ENCODE measurements at regions of chr7 and their contacts with region 1.

Region 1: DNA sequence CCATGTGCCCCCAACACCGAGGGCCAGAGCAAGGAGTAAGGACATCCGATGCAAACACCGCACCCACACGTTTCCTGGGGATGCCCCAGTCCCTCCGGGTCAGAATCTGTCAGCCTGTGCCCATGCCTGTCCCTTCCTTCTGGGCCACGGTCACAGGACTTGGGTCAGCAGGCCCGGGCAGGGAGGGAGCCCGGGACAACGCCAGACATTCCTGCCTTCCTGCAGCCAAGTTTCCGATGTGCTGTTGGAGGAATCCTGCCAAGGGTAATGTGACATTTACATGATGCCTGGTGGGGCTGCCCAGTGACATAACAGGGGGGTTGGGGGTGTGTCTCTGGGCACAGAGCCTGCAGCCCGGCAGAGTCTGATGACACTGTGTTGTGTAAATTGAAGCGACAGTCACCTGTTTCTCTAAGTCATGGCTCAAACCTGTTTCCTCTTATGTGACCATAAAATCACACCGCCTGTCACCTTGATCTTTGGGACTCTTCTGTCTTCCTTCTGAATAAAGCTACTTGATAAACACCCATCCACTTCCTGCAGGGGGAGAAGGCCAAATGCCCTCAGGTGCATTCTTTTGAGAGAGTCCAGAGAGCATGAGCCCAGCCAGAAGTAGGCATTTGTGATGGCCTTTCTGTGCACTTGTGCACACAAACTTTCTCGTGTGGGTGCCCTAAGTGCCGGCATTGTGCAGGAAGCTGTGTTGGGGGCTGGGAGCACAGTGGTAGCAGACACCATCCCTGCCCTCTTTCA is 175.3 kb upstream of the RHEB start:
- DNase-seq: peak; percentile 25
- H3K4me3 Mint-ChIP-seq: no peak overlapping the region
- H3K27ac Mint-ChIP-seq: peak overlapping the region; percentile 54
- H3K4me1 Mint-ChIP-seq: peaks cover 35% of the 10 kb centered on the region
- H3K27me3 Mint-ChIP-seq: no peaks in the 10 kb centered on the region
- CTCF ChIP-seq: no peak

Region 2: DNA sequence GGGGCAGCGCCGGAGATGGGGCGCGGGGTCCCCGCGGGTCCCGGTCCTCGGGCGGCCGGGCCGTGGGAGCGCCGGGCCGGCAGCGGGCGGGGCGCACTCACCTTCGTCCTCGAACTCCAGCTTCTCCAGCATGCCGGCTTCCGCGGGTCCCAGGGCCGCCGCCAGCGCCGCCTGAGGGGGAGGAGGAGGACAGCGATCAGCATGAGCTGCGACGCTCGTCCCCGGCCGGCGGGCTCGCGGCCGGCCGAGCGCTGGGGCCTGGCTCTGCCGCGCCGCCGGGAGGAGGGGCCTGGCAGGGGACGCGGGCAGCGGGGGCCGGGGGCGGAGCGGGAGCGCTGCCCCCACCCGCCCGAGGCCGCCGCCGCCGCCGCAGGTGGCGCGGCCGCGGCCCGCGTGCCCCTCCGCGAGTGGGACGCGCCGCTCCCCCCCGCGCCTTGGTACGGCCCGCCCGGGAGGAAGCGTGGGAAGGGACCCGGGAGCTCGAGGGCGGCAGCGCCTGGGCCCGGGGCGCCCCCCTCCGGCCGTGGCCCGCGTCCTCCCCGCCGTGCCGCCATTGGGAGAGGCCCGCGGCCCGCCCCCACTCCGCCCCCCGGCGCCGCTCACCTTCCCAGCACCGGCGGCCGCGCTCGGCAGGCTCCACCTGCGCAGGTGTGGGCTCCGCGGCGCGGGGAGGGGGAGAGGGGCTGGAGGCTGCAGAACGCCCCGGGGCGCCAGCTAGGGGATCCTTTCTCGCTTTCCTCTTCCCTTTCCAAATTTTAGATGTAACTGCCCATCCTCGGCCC is 62.8 kb before region 1 on chr7:
- CTCF ChIA-PET with region 1: interaction called, 7 read pairs
- intact Hi-C with region 1: loop called (anchors 2 kb)
- DNase-seq: peak; percentile 92
- H3K4me3 Mint-ChIP-seq: peak overlapping the region; percentile 78
- H3K27ac Mint-ChIP-seq: peak overlapping the region; percentile 42
- H3K4me1 Mint-ChIP-seq: peaks cover 10% of the 10 kb centered on the region
- H3K27me3 Mint-ChIP-seq: no peaks in the 10 kb centered on the region
- CTCF ChIP-seq: no peak